ENCODE measurements at regions of chr6 and their contacts with region 1.

Region 1: GRCh38 chr6:125314019-125314581 is 12.3 kb upstream of the HDDC2 start:
- DNase-seq: peak; percentile 4
- H3K4me3 ChIP-seq: no peak overlapping the region
- H3K27ac ChIP-seq: no peak overlapping the region
- H3K4me1 ChIP-seq: peaks cover 0 to 4% (median 0%) of the 10 kb centered on the region in 3 donors
- H3K27me3 ChIP-seq: peaks cover 0 to 4% (median 0%) of the 10 kb centered on the region in 4 donors
- CTCF ChIP-seq: peak; percentile 53 to 85 (median 74)
- POLR2A ChIP-seq: no peak

Region 2: GRCh38 chr6:124567401-124567800 is 746.7 kb before region 1 on chr6:
- intact Hi-C with region 1: no loop called
- DNase-seq: no peak
- H3K4me3 ChIP-seq: no peak overlapping the region
- H3K27ac ChIP-seq: no peak overlapping the region
- H3K4me1 ChIP-seq: no peaks in the 10 kb centered on the region
- H3K27me3 ChIP-seq: no peaks in the 10 kb centered on the region
- CTCF ChIP-seq: no peak
- POLR2A ChIP-seq: no peak

Region 3: DNA sequence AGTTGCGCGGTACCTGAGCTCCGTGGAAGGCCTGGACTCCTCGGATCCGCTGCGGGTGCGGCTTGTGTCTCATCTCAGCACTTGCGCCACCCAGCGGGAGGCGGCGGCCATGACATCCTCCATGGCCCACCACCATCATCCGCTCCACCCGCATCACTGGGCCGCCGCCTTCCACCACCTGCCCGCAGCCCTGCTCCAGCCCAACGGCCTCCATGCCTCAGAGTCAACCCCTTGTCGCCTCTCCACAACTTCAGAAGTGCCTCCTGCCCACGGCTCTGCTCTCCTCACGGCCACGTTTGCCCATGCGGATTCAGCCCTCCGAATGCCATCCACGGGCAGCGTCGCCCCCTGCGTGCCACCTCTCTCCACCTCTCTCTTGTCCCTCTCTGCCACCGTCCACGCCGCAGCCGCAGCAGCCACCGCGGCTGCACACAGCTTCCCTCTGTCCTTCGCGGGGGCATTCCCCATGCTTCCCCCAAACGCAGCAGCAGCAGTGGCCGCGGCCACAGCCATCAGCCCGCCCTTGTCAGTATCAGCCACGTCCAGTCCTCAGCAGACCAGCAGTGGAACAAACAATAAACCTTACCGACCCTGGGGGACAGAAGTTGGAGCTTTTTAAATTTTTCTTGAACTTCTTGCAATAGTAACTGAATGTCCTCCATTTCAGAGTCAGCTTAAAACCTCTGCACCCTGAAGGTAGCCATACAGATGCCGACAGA is 445.2 kb after region 1 on chr6:
- intact Hi-C with region 1: loop called (anchors 5 kb)
- DNase-seq: no peak
- H3K4me3 ChIP-seq: no peak overlapping the region
- H3K27ac ChIP-seq: no peak overlapping the region
- H3K4me1 ChIP-seq: no peaks in the 10 kb centered on the region
- H3K27me3 ChIP-seq: peaks cover 0 to 47% (median 0%) of the 10 kb centered on the region in 4 donors
- CTCF ChIP-seq: peak in 1 of 6 experiments; percentile 6
- POLR2A ChIP-seq: no peak